A673 (cell line): ENCODE measurements at regions of chr2 and their contacts with region 1.

Region 1: DNA sequence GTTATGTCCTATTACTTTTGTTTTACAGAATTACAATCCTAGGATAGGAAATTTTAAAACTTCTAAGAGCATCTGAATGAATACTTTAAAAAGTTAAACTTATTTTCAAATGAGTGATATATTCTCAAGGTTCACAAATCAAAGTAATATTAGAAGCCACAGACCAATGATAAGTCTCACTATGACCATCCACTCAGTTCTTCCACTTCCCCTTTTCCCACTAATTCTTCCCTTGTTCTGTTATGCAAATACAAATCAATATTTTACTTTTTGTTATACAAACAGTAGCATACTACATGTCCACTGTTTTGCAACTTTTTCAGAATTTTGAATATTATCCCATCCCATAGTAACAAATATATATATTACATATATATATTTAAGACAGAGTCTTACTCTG is 20.2 kb downstream of the USP37 start:
- DNase-seq: no peak
- H3K4me3 ChIP-seq: no peak overlapping the region
- H3K27ac ChIP-seq: no peak overlapping the region
- H3K4me1 ChIP-seq: no peaks in the 10 kb centered on the region
- H3K27me3 ChIP-seq: no peaks in the 10 kb centered on the region
- CTCF ChIP-seq: no peak

Region 2: GRCh38 chr2:217049956-217050355 is 1498.0 kb before region 1 on chr2:
- CTCF ChIA-PET with region 1: no interaction called
- POLR2A ChIA-PET with region 1: interaction called, 12 read pairs
- intact Hi-C with region 1: no loop called
- DNase-seq: no peak
- H3K4me3 ChIP-seq: no peak overlapping the region
- H3K27ac ChIP-seq: no peak overlapping the region
- H3K4me1 ChIP-seq: no peaks in the 10 kb centered on the region
- H3K27me3 ChIP-seq: no peaks in the 10 kb centered on the region
- CTCF ChIP-seq: no peak